ENCODE measurements at regions of chr2 and their contacts with region 1.

Region 1: GRCh38 chr2:118186110-118186857 is 98.0 kb downstream of the INSIG2 start:
- DNase-seq: peak; percentile 95
- H3K4me3 ChIP-seq: peak overlapping the region; percentile 33 to 86 (median 56)
- H3K27ac ChIP-seq: peak overlapping the region; percentile 64 to 91 (median 86)
- H3K4me1 ChIP-seq: peaks cover 0 to 22% (median 20%) of the 10 kb centered on the region in 6 donors
- H3K27me3 ChIP-seq: no peaks in the 10 kb centered on the region
- CTCF ChIP-seq: peak in 5 of 11 experiments; percentile 13 to 39 (median 27)
- POLR2A ChIP-seq: peak in 1 of 3 donors; percentile 95

Region 2: DNA sequence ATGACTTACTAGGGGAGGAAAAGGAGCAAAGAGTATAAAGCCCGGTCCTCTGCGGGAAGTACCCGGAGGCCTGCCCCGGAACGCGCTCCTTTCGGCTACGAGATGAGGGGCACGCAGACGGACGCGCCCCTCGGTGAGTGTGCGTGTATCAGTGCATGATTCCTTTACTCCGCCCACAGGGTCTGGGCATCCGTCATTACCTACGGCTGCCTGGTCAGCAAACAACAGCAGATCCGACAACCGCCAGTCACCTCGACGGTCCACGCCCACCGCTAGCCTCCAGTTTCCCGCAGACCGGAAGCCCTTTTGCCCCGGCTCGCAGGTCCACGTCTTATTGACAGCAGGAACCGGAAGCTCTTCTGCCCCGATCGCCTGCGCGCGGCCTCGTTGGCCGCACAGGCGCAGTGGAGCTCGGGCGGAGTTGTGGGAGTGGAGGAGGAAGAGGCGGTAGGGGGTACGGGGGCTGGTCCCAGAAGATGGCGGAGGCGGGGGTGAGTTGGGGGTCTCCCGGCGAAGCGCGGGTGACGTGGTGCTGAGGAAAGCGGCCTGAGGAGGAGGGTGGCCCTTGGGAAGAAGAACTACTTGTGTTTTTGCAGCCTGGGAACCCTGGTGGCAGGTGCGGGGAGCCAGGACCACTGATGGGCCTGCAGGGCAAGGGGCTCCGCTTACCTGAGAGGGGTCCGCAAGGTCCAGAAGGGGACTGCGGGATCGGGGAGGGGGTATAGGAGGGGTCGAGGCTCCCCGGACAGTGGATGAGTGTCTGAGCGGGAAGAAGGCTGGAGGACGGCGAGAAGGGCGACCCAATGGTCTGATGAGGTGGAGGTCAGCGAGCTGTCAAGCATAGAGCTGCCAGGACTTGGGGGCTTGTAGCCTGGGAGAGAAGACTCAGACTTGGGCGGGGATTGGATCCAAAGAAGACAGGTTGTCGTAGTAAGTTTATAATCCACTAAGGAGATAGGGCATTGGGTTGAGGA is 97.9 kb before region 1 on chr2 and contains the start of gene INSIG2:
- intact Hi-C with region 1: loop called (anchors 5 kb)
- DNase-seq: peak; percentile 98
- H3K4me3 ChIP-seq: peak within 1 kb of the TSS; percentile 68 to 90 (median 77)
- H3K27ac ChIP-seq: peak within 1 kb of the TSS; percentile 65 to 89 (median 86)
- H3K4me1 ChIP-seq: peaks cover 3 to 51% (median 36%) of the 10 kb centered on the region in 6 donors
- H3K27me3 ChIP-seq: no peaks in the 10 kb centered on the region
- CTCF ChIP-seq: peak in 3 of 11 experiments; percentile 16 to 48 (median 20)
- POLR2A ChIP-seq: no peak
- total RNA-seq, gene INSIG2: 23.9 to 42.7 (median 33.7) TPM

Region 3: GRCh38 chr2:118242216-118242615 is 55.9 kb after region 1 on chr2:
- intact Hi-C with region 1: no loop called
- DNase-seq: no peak
- H3K4me3 ChIP-seq: no peak overlapping the region
- H3K27ac ChIP-seq: no peak overlapping the region
- H3K4me1 ChIP-seq: no peaks in the 10 kb centered on the region
- H3K27me3 ChIP-seq: peaks cover 0 to 52% (median 0%) of the 10 kb centered on the region in 7 donors
- CTCF ChIP-seq: no peak
- POLR2A ChIP-seq: no peak

Measured in spleen (tissue), 13 donors.